GM13976 (cell line): ENCODE measurements at regions of chr1 and their contacts with region 1.

Region 1: GRCh38 chr1:72037745-72038343 is 244.5 kb downstream of the NEGR1 start:
- DNase-seq: no peak
- CTCF ChIP-seq: peak; percentile 31

Region 2: GRCh38 chr1:71587961-71588360 is 449.9 kb before region 1 on chr1:
- in situ Hi-C with region 1: loop called (anchors 25 kb)
- DNase-seq: no peak
- CTCF ChIP-seq: no peak

Region 3: GRCh38 chr1:71745326-71745725 is 292.5 kb before region 1 on chr1:
- in situ Hi-C with region 1: no loop called
- DNase-seq: no peak
- CTCF ChIP-seq: no peak

Region 4: GRCh38 chr1:72111662-72112061 is 73.8 kb after region 1 on chr1:
- in situ Hi-C with region 1: no loop called
- DNase-seq: no peak
- CTCF ChIP-seq: no peak

Region 5: DNA sequence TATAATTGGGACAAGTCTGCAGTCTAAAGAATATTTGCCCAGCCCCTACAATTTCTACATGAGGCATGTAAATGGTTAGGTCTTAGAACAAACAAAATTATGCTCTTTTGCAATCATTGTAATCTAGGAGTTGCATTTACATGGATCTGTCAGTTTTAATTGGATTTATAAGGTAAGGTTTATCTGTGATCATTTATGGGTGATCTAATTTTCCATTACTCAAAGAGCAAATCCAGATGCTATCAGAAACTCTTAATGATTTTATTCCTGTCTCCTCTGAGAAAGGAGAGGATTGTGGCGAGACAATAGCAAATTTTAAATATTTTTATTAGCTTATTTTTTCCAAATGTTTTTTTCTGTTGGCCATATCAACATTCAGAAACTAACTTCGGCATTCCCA is 258.6 kb after region 1 on chr1:
- in situ Hi-C with region 1: no loop called
- DNase-seq: no peak
- CTCF ChIP-seq: no peak